GM12878 (cell line): ENCODE measurements at regions of chr3 and their contacts with region 1.

Region 1: GRCh38 chr3:160941885-160942494 is 163.2 kb downstream of the B3GALNT1 start:
- DNase-seq: peak; percentile 41
- ATAC-seq: peak; percentile 90
- H3K4me3 ChIP-seq: no peak overlapping the region
- H3K27ac ChIP-seq: no peak overlapping the region
- H3K4me1 ChIP-seq: no peaks in the 10 kb centered on the region
- H3K27me3 ChIP-seq: no peaks in the 10 kb centered on the region
- CTCF ChIP-seq: peak; percentile 63 to 86 (median 74); a peak in 5 of 6 replicates
- EP300 ChIP-seq: no peak
- POLR2A ChIP-seq: no peak
- RAD21 ChIP-seq: peak; percentile 91

Region 2: GRCh38 chr3:160577556-160578195 is 364.3 kb before region 1 on chr3:
- CTCF ChIA-PET with region 1: no interaction called
- POLR2A ChIA-PET with region 1: no interaction called
- RAD21 ChIA-PET with region 1: no interaction called
- SMC1A ChIA-PET with region 1: no interaction called
- in situ Hi-C with region 1: no loop called
- intact Hi-C with region 1: loop called (anchors 5 kb)
- DNase-seq: no peak
- ATAC-seq: peak; percentile 46; the same call in 1 of the 3 replicates
- H3K4me3 ChIP-seq: no peak overlapping the region
- H3K27ac ChIP-seq: no peak overlapping the region
- H3K4me1 ChIP-seq: no peaks in the 10 kb centered on the region
- H3K27me3 ChIP-seq: no peaks in the 10 kb centered on the region
- CTCF ChIP-seq: peak in 1 of 3 experiments; percentile 36; a peak in 2 of 6 replicates
- EP300 ChIP-seq: no peak
- POLR2A ChIP-seq: no peak
- RAD21 ChIP-seq: peak; percentile 29; the same call in 1 of the 2 replicates

Region 3: DNA sequence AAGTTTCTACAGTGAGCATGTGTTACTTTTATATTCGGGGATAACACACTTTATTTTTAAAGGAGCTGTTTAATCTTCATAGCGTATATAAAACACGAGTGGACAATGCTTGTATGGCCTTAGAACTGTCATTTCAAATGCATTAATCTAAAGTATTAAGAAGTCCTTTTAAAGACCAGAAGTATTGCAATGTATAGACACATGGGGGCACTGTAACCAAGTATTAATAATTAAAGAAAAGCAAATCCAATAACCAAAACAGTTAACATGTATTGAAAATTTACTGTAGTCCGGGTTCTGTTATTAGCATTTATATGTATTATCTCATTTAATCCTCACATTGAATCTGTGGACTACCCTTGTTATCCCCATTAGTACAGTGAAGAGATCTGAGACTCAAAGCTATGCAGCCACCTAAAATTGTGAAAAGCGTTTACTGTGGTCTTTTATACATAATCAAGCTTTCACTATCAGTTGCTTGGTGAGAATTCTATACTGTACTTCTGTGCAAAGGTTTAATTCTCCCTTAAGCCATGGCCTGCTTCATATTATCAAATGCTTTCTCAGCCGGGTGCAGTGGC is 254.9 kb before region 1 on chr3:
- CTCF ChIA-PET with region 1: interaction called, 46 read pairs
- POLR2A ChIA-PET with region 1: no interaction called
- RAD21 ChIA-PET with region 1: interaction called, 9 read pairs
- SMC1A ChIA-PET with region 1: interaction called, 12 read pairs
- in situ Hi-C with region 1: no loop called
- intact Hi-C with region 1: loop called (anchors 1 kb)
- DNase-seq: no peak
- ATAC-seq: peak; percentile 67
- H3K4me3 ChIP-seq: no peak overlapping the region
- H3K27ac ChIP-seq: no peak overlapping the region
- H3K4me1 ChIP-seq: no peaks in the 10 kb centered on the region
- H3K27me3 ChIP-seq: no peaks in the 10 kb centered on the region
- CTCF ChIP-seq: peak; percentile 23 to 45 (median 29); a peak in 4 of 6 replicates
- EP300 ChIP-seq: no peak
- POLR2A ChIP-seq: no peak
- RAD21 ChIP-seq: peak; percentile 30; the same call in 1 of the 2 replicates

Region 4: GRCh38 chr3:160707187-160707794 is 234.7 kb before region 1 on chr3:
- CTCF ChIA-PET with region 1: interaction called, 22 read pairs
- POLR2A ChIA-PET with region 1: no interaction called
- RAD21 ChIA-PET with region 1: interaction called, 3 read pairs
- SMC1A ChIA-PET with region 1: interaction called, 16 read pairs
- in situ Hi-C with region 1: loop called (anchors 5 kb)
- intact Hi-C with region 1: loop called (anchors 1 kb)
- DNase-seq: peak; percentile 11
- ATAC-seq: peak; percentile 83
- H3K4me3 ChIP-seq: no peak overlapping the region
- H3K27ac ChIP-seq: no peak overlapping the region
- H3K4me1 ChIP-seq: no peaks in the 10 kb centered on the region
- H3K27me3 ChIP-seq: peaks cover 3 to 5% of the 10 kb centered on the region in 2 experiments; a peak in 2 of 4 replicates
- CTCF ChIP-seq: peak; percentile 42 to 68 (median 46); a peak in 5 of 6 replicates
- EP300 ChIP-seq: no peak
- POLR2A ChIP-seq: no peak
- RAD21 ChIP-seq: peak; percentile 78

Region 5: GRCh38 chr3:160842021-160843005 is 99.7 kb before region 1 on chr3:
- CTCF ChIA-PET with region 1: interaction called, 13 read pairs
- POLR2A ChIA-PET with region 1: no interaction called
- RAD21 ChIA-PET with region 1: no interaction called
- SMC1A ChIA-PET with region 1: no interaction called
- in situ Hi-C with region 1: no loop called
- intact Hi-C with region 1: no loop called
- DNase-seq: no peak
- ATAC-seq: no peak
- H3K4me3 ChIP-seq: no peak overlapping the region
- H3K27ac ChIP-seq: no peak overlapping the region
- H3K4me1 ChIP-seq: no peaks in the 10 kb centered on the region
- H3K27me3 ChIP-seq: no peaks in the 10 kb centered on the region; a peak in 1 of 4 replicates
- CTCF ChIP-seq: no peak
- EP300 ChIP-seq: no peak
- POLR2A ChIP-seq: no peak
- RAD21 ChIP-seq: no peak

Region 6: DNA sequence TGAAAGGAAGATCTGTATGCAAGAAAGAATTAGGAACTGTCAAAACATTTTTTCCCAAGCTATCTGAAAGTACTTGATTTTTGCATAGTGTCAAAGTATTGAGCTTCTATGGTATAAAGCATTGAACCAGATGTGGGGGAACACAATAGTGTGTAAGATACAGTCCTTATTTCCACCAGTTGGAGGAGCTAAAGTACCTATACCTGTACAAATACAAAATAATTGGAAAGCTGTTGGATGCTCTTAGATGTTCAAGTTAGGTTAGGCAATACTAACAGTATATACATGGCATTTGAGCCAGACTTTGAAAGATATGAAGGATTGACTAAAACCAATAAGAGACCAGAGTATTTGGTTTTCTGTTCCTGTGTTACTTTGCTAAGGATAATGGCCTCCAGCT is 14.8 kb after region 1 on chr3:
- CTCF ChIA-PET with region 1: interaction called, 11 read pairs
- POLR2A ChIA-PET with region 1: no interaction called
- RAD21 ChIA-PET with region 1: no interaction called
- SMC1A ChIA-PET with region 1: interaction called, 4 read pairs
- in situ Hi-C with region 1: no loop called
- intact Hi-C with region 1: no loop called
- DNase-seq: no peak
- ATAC-seq: peak; percentile 79
- H3K4me3 ChIP-seq: no peak overlapping the region
- H3K27ac ChIP-seq: no peak overlapping the region
- H3K4me1 ChIP-seq: no peaks in the 10 kb centered on the region
- H3K27me3 ChIP-seq: no peaks in the 10 kb centered on the region
- CTCF ChIP-seq: peak; percentile 44 to 55 (median 47); a peak in 5 of 6 replicates
- EP300 ChIP-seq: no peak
- POLR2A ChIP-seq: no peak
- RAD21 ChIP-seq: peak; percentile 62